Stomach (tissue), 19 donors: ENCODE measurements at regions of chr12 and their contacts with region 1.

Region 1: GRCh38 chr12:71415336-71416231 is 24.0 kb upstream of the LGR5 start:
- DNase-seq: peak in 1 of 2 donors; percentile 78
- H3K4me3 ChIP-seq: no peak overlapping the region
- H3K27ac ChIP-seq: no peak overlapping the region
- H3K4me1 ChIP-seq: no peaks in the 10 kb centered on the region
- H3K27me3 ChIP-seq: no peaks in the 10 kb centered on the region
- CTCF ChIP-seq: peak in 5 of 7 experiments; percentile 21 to 71 (median 64)
- EP300 ChIP-seq: no peak
- POLR2A ChIP-seq: no peak

Region 2: DNA sequence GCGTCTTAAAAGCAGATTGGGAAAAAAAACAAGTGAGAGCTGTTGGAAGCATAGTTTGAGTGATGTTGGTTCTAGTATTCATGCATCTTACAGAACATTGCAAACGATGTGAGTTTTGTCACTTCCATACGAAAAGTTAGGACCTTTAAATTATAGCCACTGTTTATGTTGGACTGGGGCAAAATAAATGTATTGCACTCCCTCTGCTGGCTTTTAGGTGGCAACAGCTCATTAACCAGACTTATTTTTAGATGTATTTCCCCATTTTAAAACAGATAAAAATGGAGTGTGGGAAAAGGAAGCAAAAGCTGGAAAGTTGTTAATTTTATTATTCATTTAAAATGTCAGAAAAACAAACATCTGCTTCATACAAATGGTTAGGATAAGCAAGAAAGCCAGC is 135.9 kb after region 1 on chr12:
- intact Hi-C with region 1: loop called (anchors 5 kb)
- DNase-seq: peak in 1 of 2 donors; percentile 38
- H3K4me3 ChIP-seq: no peak overlapping the region
- H3K27ac ChIP-seq: no peak overlapping the region
- H3K4me1 ChIP-seq: no peaks in the 10 kb centered on the region
- H3K27me3 ChIP-seq: no peaks in the 10 kb centered on the region
- CTCF ChIP-seq: peak in 2 of 7 experiments; percentile 16 to 29
- EP300 ChIP-seq: no peak
- POLR2A ChIP-seq: no peak